Endothelial cell of umbilical vein (primary cell): ENCODE measurements at regions of chr3 and their contacts with region 1.

Region 1: GRCh38 chr3:99645277-99646106 is 7.1 kb downstream of the COL8A1 start:
- DNase-seq: peak; percentile 76
- H3K4me3 ChIP-seq: no peak overlapping the region
- H3K27ac ChIP-seq: peak overlapping the region; percentile 75
- H3K4me1 ChIP-seq: peaks cover 97% of the 10 kb centered on the region
- H3K27me3 ChIP-seq: no peaks in the 10 kb centered on the region
- CTCF ChIP-seq: peak; percentile 47 to 68
- POLR2A ChIP-seq: peak; percentile 34

Region 2: DNA sequence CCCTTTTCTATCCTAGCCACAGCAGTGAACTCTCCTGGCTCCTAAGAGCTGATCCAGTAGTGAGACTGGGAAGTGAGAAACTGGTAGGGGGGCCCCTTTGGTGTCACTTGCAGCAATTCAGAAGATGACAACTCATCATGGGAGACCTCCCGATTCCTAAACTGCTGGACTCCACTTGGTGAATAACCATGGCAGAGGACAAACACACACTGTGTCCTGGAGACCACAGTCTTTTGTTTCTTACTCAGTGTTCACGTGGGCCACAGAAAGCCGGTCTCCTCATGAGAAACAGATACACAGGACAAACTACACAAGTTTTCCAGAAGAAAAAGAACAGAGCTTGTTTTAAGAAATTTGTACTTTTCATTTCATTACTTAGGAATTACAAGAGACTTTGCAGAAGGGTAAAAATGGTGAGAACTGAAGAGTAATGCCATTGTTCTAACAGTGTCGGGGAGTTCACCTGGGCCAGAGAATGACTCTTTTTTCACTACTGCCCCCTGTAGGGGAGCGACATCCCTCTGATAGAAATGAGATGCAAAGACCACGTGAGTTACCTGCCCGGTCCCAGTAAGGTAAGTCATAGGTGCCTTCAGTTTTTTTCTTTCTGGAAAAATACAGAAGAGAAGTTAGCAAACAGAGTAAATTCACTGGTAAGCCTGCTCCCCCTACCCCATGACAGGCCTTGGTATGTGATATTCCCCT is 844.3 kb before region 1 on chr3:
- CTCF ChIA-PET with region 1: no interaction called
- POLR2A ChIA-PET with region 1: no interaction called
- dilution Hi-C with region 1: no loop called
- intact Hi-C with region 1: no loop called
- DNase-seq: no peak
- H3K4me3 ChIP-seq: no peak overlapping the region
- H3K27ac ChIP-seq: no peak overlapping the region
- H3K4me1 ChIP-seq: no peaks in the 10 kb centered on the region
- H3K27me3 ChIP-seq: no peaks in the 10 kb centered on the region
- CTCF ChIP-seq: no peak
- POLR2A ChIP-seq: no peak

Region 3: DNA sequence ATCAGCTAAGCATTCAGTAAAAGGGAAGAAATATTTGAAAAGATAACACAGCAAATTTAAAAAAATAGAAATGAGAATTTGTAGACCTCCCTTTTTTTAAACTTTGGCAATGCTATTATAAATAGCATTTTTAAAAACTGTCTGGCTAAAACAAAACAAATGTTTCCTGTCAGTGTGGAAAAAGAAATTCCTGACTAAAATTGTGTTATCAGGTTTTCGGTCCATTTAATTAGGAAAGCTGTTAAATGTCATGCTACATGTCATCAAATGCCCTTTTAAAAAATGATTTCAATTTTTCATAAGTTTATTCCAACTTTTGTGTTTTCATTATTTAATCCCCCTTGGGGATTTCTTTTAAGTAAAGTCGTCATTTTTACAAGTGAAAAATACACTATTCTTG is 22.6 kb after region 1 on chr3:
- CTCF ChIA-PET with region 1: interaction called, 101 read pairs
- POLR2A ChIA-PET with region 1: interaction called, 3 read pairs
- dilution Hi-C with region 1: no loop called
- intact Hi-C with region 1: no loop called
- DNase-seq: no peak
- H3K4me3 ChIP-seq: no peak overlapping the region
- H3K27ac ChIP-seq: peak overlapping the region; percentile 12
- H3K4me1 ChIP-seq: peaks cover 52% of the 10 kb centered on the region
- H3K27me3 ChIP-seq: no peaks in the 10 kb centered on the region
- CTCF ChIP-seq: no peak
- POLR2A ChIP-seq: no peak

Region 4: GRCh38 chr3:99686955-99687612 is 41.6 kb after region 1 on chr3:
- CTCF ChIA-PET with region 1: interaction called, 48 read pairs
- POLR2A ChIA-PET with region 1: no interaction called
- dilution Hi-C with region 1: no loop called
- intact Hi-C with region 1: loop called (anchors 1 kb)
- DNase-seq: peak; percentile 71
- H3K4me3 ChIP-seq: no peak overlapping the region
- H3K27ac ChIP-seq: no peak overlapping the region
- H3K4me1 ChIP-seq: peaks cover 11% of the 10 kb centered on the region
- H3K27me3 ChIP-seq: no peaks in the 10 kb centered on the region
- CTCF ChIP-seq: peak; percentile 54 to 55
- POLR2A ChIP-seq: peak; percentile 4

Region 5: DNA sequence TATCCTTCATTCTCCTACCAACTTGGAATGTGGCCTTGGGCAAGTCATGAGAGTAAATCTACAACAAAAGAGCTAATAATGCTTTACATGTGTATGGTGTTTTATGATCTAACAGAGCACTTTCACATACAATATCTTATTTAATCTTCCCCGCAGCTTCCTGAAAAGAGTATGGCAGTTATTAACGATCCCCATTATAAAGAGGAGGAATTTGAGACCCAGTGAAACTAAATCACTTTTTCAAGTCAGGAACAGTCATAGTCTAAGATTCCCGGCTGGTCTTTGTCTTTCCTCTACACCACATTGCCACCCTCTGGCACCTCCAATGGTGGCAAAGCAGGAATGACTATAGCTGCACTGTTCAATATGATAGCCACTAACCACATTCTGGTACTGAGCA is 102.4 kb after region 1 on chr3:
- CTCF ChIA-PET with region 1: interaction called, 29 read pairs
- POLR2A ChIA-PET with region 1: no interaction called
- dilution Hi-C with region 1: no loop called
- intact Hi-C with region 1: loop called (anchors 1 kb)
- DNase-seq: peak; percentile 62
- H3K4me3 ChIP-seq: no peak overlapping the region
- H3K27ac ChIP-seq: peak overlapping the region; percentile 12
- H3K4me1 ChIP-seq: peaks cover 24% of the 10 kb centered on the region
- H3K27me3 ChIP-seq: no peaks in the 10 kb centered on the region
- CTCF ChIP-seq: peak; percentile 23 to 27
- POLR2A ChIP-seq: no peak